Calu3 (cell line): ENCODE measurements at regions of chr3 and their contacts with region 1.

Region 1: GRCh38 chr3:45224824-45225464 is 1.1 kb downstream of the TMEM158 start:
- DNase-seq: peak; percentile 79
- H3K4me3 Mint-ChIP-seq: peak overlapping the region; percentile 75
- H3K27ac Mint-ChIP-seq: no peak overlapping the region
- H3K4me1 Mint-ChIP-seq: no peaks in the 10 kb centered on the region
- H3K27me3 Mint-ChIP-seq: peaks cover 34% of the 10 kb centered on the region
- CTCF ChIP-seq: peak; percentile 37

Region 2: DNA sequence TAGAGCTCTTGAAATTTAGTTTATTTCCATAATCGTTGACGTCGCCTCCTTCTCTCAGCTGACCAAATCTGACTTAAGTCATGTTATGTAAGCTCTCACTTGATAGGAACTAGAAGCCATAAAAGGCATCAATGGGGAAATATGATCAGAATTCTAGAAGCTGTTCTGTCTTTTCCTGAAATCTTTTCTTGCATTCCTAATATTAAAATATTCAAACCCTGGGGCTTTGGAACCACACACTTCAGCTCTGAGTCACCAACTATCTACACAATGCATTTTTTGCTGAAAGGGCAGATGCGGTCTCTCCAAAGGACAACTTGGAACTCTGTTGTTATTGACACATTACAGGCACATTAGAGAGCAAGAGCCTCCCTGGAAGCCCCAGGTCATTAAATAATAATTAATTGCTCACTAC is 254.7 kb after region 1 on chr3:
- CTCF ChIA-PET with region 1: no interaction called
- intact Hi-C with region 1: loop called (anchors 5 kb)
- DNase-seq: peak; percentile 5
- H3K4me3 Mint-ChIP-seq: no peak overlapping the region
- H3K27ac Mint-ChIP-seq: no peak overlapping the region
- H3K4me1 Mint-ChIP-seq: peaks cover 23% of the 10 kb centered on the region
- H3K27me3 Mint-ChIP-seq: no peaks in the 10 kb centered on the region
- CTCF ChIP-seq: no peak

Region 3: DNA sequence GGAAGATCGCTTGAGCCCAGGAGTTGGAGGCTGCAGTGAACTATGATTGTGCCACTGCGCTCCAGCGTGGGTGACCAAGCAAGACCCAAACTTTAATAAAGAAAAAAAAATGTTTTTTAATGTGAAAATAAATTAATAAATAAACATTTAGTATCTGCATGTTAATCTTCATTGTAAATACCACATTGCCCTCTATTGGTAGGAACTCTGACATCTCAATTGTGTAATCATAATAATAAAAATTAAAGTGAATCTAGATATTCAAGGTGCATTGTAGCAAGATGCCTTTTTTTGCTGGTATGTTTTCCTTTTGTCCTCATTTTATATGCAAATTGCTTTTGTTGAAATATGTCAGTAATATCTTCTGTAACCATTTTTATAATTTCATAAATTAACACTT is 274.6 kb after region 1 on chr3:
- CTCF ChIA-PET with region 1: no interaction called
- intact Hi-C with region 1: loop called (anchors 5 kb)
- DNase-seq: no peak
- H3K4me3 Mint-ChIP-seq: no peak overlapping the region
- H3K27ac Mint-ChIP-seq: no peak overlapping the region
- H3K4me1 Mint-ChIP-seq: no peaks in the 10 kb centered on the region
- H3K27me3 Mint-ChIP-seq: no peaks in the 10 kb centered on the region
- CTCF ChIP-seq: no peak